PC-9 (cell line): ENCODE measurements at regions of chr1 and their contacts with region 1.

Region 1: DNA sequence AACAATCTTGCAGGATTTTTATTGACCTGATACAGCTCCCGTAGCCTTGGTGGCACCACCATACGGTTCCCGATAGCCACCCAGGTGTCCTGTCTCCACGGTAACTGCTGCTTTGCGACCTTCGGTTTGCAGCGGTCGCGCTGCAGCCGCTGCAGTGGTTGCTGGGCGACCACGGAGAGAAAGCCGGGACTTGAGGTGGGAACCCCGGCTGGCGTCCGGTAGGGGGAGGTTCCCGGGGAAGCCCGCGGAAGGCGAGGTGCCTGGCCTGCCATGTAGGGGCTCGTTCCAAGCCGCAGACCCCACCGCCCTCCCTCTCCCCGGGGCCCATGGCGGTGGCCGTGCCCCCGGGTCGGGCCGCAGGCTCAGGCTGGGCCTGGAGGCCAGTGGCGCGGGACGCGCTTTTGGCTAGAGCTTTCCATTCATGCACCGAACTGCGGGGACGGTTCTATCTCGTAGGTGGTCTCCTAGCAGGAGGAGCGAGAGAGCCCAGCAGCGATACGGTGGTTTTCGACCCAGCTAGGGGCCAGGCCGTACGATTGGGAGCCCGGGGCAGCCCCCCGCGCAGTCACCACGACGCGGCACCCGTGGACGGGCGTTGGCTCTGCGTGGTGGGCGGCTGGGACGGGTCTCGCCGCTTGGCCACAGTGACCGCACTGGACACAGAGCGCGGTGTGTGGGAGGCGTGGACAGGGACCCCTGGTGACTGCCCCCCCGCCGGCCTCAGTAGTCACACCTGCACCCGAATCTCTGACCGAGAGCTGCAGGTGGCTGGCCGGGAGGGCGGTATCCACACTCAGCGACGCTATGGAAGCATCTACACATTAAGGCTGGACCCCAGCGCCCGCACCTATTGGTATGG is at the start of gene KLHDC9:
- DNase-seq: peak; percentile 80 to 84
- H3K4me3 ChIP-seq: peak within 1 kb of the TSS; percentile 66
- H3K27ac ChIP-seq: no peak within 1 kb of the TSS
- H3K4me1 ChIP-seq: peaks cover 16% of the 10 kb centered on the region
- H3K27me3 ChIP-seq: no peaks in the 10 kb centered on the region
- CTCF ChIP-seq: no peak
- total RNA-seq, gene KLHDC9: 5.6 and 7.4 TPM in 2 replicates

Region 2: GRCh38 chr1:161033751-161034150 is 64.7 kb before region 1 on chr1:
- CTCF ChIA-PET with region 1: no interaction called
- POLR2A ChIA-PET with region 1: no interaction called
- intact Hi-C with region 1: no loop called
- DNase-seq: peak in 1 of 2 experiments; percentile 83
- H3K4me3 ChIP-seq: no peak overlapping the region
- H3K27ac ChIP-seq: peak overlapping the region; percentile 68; the same call in 1 of the 2 replicates
- H3K4me1 ChIP-seq: peaks cover 35% of the 10 kb centered on the region
- H3K27me3 ChIP-seq: no peaks in the 10 kb centered on the region
- CTCF ChIP-seq: no peak

Region 3: GRCh38 chr1:161045750-161046571 is 52.5 kb before region 1 on chr1 and contains the start of gene USF1:
- CTCF ChIA-PET with region 1: interaction called, 5 read pairs
- POLR2A ChIA-PET with region 1: no interaction called
- intact Hi-C with region 1: loop called (anchors 1 kb)
- DNase-seq: peak; percentile 89 to 90
- H3K4me3 ChIP-seq: peak within 1 kb of the TSS; percentile 66
- H3K27ac ChIP-seq: peak within 1 kb of the TSS; percentile 85
- H3K4me1 ChIP-seq: peaks cover 15% of the 10 kb centered on the region
- H3K27me3 ChIP-seq: no peaks in the 10 kb centered on the region
- CTCF ChIP-seq: 0 out of 2 replicates have a peak, but pooled peaks have one; percentile 19
- total RNA-seq, gene USF1: 34.8 and 43.2 TPM in 2 replicates

Region 4: DNA sequence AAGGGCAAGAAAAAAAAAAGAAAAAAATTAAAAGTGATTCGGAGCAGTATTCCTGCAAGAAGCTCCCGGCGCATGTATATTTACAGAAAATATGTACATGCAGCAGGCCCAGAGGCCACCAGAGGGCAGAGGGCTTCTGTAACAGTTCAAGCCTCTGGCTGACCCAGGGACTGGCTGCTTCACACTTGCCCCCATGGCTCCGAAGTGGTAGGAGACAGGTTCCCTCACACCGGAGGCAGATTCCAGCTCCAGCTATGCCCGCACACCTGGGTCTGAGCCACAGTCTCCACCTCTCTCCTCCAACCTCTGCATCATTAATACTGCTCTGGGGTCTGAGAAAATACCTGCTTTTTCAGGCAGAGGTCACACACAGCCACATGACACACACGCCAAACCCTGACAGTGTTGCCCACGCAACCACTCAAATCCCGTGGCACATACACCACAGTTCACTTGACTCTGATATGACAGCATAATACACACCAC is 26.5 kb before region 1 on chr1:
- CTCF ChIA-PET with region 1: interaction called, 6 read pairs
- POLR2A ChIA-PET with region 1: no interaction called
- intact Hi-C with region 1: loop called (anchors 1 kb)
- DNase-seq: peak in 1 of 2 experiments; percentile 50
- H3K4me3 ChIP-seq: no peak overlapping the region
- H3K27ac ChIP-seq: no peak overlapping the region
- H3K4me1 ChIP-seq: no peaks in the 10 kb centered on the region
- H3K27me3 ChIP-seq: no peaks in the 10 kb centered on the region
- CTCF ChIP-seq: peak; percentile 79

Region 5: GRCh38 chr1:161082991-161083742 is 15.3 kb before region 1 on chr1:
- CTCF ChIA-PET with region 1: no interaction called
- POLR2A ChIA-PET with region 1: interaction called, 16 read pairs
- intact Hi-C with region 1: loop called (anchors 2 kb)
- DNase-seq: peak; percentile 96 to 98
- H3K4me3 ChIP-seq: peak overlapping the region; percentile 4; the same call in 1 of the 2 replicates
- H3K27ac ChIP-seq: peak overlapping the region; percentile 81
- H3K4me1 ChIP-seq: peaks cover 75% of the 10 kb centered on the region
- H3K27me3 ChIP-seq: no peaks in the 10 kb centered on the region
- CTCF ChIP-seq: no peak

Region 6: GRCh38 chr1:161132410-161133219 is 34.2 kb after region 1 on chr1 and contains the start of gene DEDD:
- CTCF ChIA-PET with region 1: interaction called, 3 read pairs
- POLR2A ChIA-PET with region 1: no interaction called
- intact Hi-C with region 1: loop called (anchors 2 kb)
- DNase-seq: peak; percentile 84 to 92
- H3K4me3 ChIP-seq: peak within 1 kb of the TSS; percentile 66
- H3K27ac ChIP-seq: peak within 1 kb of the TSS; percentile 91
- H3K4me1 ChIP-seq: peaks cover 33% of the 10 kb centered on the region
- H3K27me3 ChIP-seq: no peaks in the 10 kb centered on the region
- CTCF ChIP-seq: no peak
- total RNA-seq, gene DEDD: 26.7 and 29.8 TPM in 2 replicates